ENCODE measurements at regions of chr1 and their contacts with region 1.

Region 1: DNA sequence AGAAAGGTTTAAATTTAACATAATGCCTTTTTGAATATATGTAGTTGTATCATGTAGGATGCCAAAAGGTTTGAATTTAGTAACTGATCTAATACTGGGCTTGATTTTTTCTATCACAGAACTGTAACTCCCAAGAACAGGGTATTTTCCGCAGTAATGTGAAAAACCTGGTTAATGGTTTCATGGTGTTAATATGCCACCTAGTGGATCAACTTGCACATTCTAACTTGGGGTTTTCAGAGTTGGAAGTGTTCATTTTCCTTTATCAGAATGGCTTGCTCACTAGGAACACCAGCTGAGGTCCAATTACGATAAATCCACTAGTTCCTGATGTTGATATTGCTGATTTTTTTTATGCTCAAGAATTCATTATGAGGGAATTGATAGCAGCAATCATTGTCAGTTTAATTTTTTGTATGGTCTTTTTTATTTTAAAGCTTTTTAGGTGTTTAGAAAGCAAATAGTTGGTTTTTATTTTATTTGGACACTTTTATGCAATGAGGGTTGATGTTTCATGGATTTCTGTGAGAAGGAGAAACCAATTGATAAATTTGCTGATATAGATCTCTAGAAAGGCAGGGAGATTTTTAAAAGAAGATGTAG is 157.2 kb downstream of the PLA2G4A start:
- DNase-seq: peak in 3 of 14 experiments; percentile 42 to 59 (median 55)
- ATAC-seq: peak; percentile 34
- H3K4me3 ChIP-seq: no peak overlapping the region
- H3K4me3 Mint-ChIP-seq: no peak overlapping the region
- H3K27ac ChIP-seq: no peak overlapping the region
- H3K27ac Mint-ChIP-seq: no peak overlapping the region
- H3K4me1 ChIP-seq: no peaks in the 10 kb centered on the region
- H3K4me1 Mint-ChIP-seq: no peaks in the 10 kb centered on the region
- H3K27me3 ChIP-seq: no peaks in the 10 kb centered on the region
- H3K27me3 Mint-ChIP-seq: no peaks in the 10 kb centered on the region
- CTCF ChIP-seq: peak; percentile 63

Region 2: DNA sequence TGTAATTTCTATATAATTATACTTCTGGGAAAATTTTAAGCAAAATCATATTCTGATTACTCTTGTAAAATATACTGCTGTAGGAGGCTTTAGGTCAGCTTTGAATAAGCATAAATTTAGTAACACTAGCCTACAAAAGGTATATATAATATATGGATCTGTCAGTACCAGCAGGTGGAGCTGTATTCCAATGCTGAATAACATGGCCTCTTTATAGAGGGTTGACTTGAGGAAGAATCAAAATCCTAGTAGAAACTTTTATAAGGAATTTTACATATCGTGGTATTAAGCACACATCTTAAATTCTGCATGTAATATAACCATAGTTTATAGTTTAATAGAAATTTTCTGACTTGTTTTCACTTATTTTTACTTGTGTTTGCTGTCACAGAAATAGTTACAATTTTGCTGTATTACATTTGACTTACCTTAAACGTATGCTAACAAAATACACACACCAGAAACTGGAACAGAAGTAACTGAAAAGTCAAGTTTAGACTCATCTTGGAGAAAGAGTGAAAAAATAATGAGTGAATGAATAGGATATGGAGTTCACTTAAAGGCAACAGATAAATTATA is 1172.5 kb before region 1 on chr1:
- CTCF ChIA-PET with region 1: no interaction called
- POLR2A ChIA-PET with region 1: no interaction called
- intact Hi-C with region 1: loop called in 1 of 2 experiments (anchors 10 kb)
- DNase-seq: peak in 3 of 14 experiments; percentile 20 to 32 (median 26)
- ATAC-seq: no peak
- H3K4me3 ChIP-seq: no peak overlapping the region
- H3K4me3 Mint-ChIP-seq: no peak overlapping the region
- H3K27ac ChIP-seq: no peak overlapping the region
- H3K27ac Mint-ChIP-seq: no peak overlapping the region
- H3K4me1 ChIP-seq: no peaks in the 10 kb centered on the region
- H3K4me1 Mint-ChIP-seq: no peaks in the 10 kb centered on the region
- H3K27me3 ChIP-seq: no peaks in the 10 kb centered on the region
- H3K27me3 Mint-ChIP-seq: peaks cover 15% of the 10 kb centered on the region
- CTCF ChIP-seq: peak; percentile 53

Region 3: GRCh38 chr1:186272486-186272885 is 713.5 kb before region 1 on chr1:
- CTCF ChIA-PET with region 1: no interaction called
- POLR2A ChIA-PET with region 1: no interaction called
- intact Hi-C with region 1: loop called in 1 of 2 experiments (anchors 10 kb)
- DNase-seq: peak in 3 of 14 experiments; percentile 25 to 46 (median 41)
- ATAC-seq: peak; percentile 48
- H3K4me3 ChIP-seq: no peak overlapping the region
- H3K4me3 Mint-ChIP-seq: no peak overlapping the region
- H3K27ac ChIP-seq: no peak overlapping the region
- H3K27ac Mint-ChIP-seq: no peak overlapping the region
- H3K4me1 ChIP-seq: no peaks in the 10 kb centered on the region
- H3K4me1 Mint-ChIP-seq: peaks cover 10% of the 10 kb centered on the region
- H3K27me3 ChIP-seq: no peaks in the 10 kb centered on the region
- H3K27me3 Mint-ChIP-seq: no peaks in the 10 kb centered on the region
- CTCF ChIP-seq: peak; percentile 67

Region 4: DNA sequence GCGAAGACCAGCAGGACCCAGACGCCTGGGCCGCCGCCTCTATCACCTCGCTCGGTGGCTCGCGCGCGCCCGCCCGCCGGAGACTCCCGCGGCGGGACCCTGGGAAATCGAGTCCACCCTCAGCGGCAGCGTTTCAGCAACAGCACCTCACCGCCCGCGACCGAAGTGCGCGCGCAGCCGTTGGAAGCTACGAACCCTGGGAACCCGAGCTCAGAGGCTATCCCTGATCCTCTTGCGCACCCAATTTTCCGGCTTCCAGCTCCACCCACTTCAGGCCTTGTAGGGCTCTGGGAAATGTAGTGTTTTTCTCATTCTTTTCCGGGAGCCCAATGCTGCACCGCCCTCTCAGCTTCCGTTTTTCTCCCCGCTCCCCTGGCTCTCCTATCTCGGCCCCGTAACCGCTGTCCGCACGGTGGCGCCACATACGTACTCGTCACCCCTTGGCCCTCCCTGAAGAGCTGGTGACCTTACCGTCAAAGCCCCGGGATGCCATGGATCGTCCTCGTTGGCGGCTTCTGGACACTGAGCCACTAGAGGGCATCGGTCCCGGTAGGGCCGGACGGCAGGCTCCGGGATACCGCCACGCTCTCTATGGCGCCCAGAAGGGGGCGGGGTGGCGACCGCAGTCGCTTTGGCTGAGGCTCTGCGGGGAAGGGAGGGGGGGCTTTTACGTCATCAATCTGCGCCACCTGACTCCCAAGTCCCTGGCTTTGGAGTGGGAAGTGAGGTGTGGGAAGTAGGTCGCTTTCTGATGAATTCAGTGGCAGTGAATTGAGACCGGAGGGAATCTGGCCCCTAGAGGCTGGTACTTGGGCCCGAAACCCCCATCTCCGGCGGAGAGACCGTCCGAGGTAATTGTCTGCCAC is 610.7 kb before region 1 on chr1 and contains the starts of genes ODR4 and TPR:
- CTCF ChIA-PET with region 1: no interaction called
- POLR2A ChIA-PET with region 1: no interaction called
- intact Hi-C with region 1: loop called in 1 of 2 experiments (anchors 1 kb)
- DNase-seq: peak; percentile 89 to 99 (median 94)
- ATAC-seq: peak; percentile 87
- H3K4me3 ChIP-seq: peak within 1 kb of the TSS; percentile 79
- H3K4me3 Mint-ChIP-seq: peak within 1 kb of the TSS; percentile 92
- H3K27ac ChIP-seq: peak within 1 kb of the TSS; percentile 89 to 96
- H3K27ac Mint-ChIP-seq: peak within 1 kb of the TSS; percentile 93
- H3K4me1 ChIP-seq: peaks cover 16% of the 10 kb centered on the region
- H3K4me1 Mint-ChIP-seq: peaks cover 77% of the 10 kb centered on the region
- H3K27me3 ChIP-seq: no peaks in the 10 kb centered on the region
- H3K27me3 Mint-ChIP-seq: no peaks in the 10 kb centered on the region
- CTCF ChIP-seq: peak; percentile 85
- total RNA-seq, gene ODR4: 21.3 to 24.5 TPM
- total RNA-seq, gene TPR: 82.3 to 91.3 TPM

Region 5: GRCh38 chr1:186404454-186405051 is 581.4 kb before region 1 on chr1:
- CTCF ChIA-PET with region 1: no interaction called
- POLR2A ChIA-PET with region 1: no interaction called
- intact Hi-C with region 1: loop called (anchors 2 to 10 kb)
- DNase-seq: peak in 3 of 14 experiments; percentile 63 to 64 (median 63)
- ATAC-seq: peak; percentile 92
- H3K4me3 ChIP-seq: no peak overlapping the region
- H3K4me3 Mint-ChIP-seq: no peak overlapping the region
- H3K27ac ChIP-seq: no peak overlapping the region
- H3K27ac Mint-ChIP-seq: peak overlapping the region; percentile 78
- H3K4me1 ChIP-seq: no peaks in the 10 kb centered on the region
- H3K4me1 Mint-ChIP-seq: no peaks in the 10 kb centered on the region
- H3K27me3 ChIP-seq: no peaks in the 10 kb centered on the region
- H3K27me3 Mint-ChIP-seq: no peaks in the 10 kb centered on the region
- CTCF ChIP-seq: peak; percentile 83

Region 6: GRCh38 chr1:186482661-186483255 is 503.2 kb before region 1 on chr1:
- CTCF ChIA-PET with region 1: no interaction called
- POLR2A ChIA-PET with region 1: no interaction called
- intact Hi-C with region 1: loop called in 1 of 2 experiments (anchors 2 kb)
- DNase-seq: peak in 11 of 14 experiments; percentile 1 to 53 (median 4)
- ATAC-seq: no peak
- H3K4me3 ChIP-seq: no peak overlapping the region
- H3K4me3 Mint-ChIP-seq: no peak overlapping the region
- H3K27ac ChIP-seq: no peak overlapping the region
- H3K27ac Mint-ChIP-seq: no peak overlapping the region
- H3K4me1 ChIP-seq: no peaks in the 10 kb centered on the region
- H3K4me1 Mint-ChIP-seq: no peaks in the 10 kb centered on the region
- H3K27me3 ChIP-seq: no peaks in the 10 kb centered on the region
- H3K27me3 Mint-ChIP-seq: no peaks in the 10 kb centered on the region
- CTCF ChIP-seq: peak; percentile 71

Region 7: DNA sequence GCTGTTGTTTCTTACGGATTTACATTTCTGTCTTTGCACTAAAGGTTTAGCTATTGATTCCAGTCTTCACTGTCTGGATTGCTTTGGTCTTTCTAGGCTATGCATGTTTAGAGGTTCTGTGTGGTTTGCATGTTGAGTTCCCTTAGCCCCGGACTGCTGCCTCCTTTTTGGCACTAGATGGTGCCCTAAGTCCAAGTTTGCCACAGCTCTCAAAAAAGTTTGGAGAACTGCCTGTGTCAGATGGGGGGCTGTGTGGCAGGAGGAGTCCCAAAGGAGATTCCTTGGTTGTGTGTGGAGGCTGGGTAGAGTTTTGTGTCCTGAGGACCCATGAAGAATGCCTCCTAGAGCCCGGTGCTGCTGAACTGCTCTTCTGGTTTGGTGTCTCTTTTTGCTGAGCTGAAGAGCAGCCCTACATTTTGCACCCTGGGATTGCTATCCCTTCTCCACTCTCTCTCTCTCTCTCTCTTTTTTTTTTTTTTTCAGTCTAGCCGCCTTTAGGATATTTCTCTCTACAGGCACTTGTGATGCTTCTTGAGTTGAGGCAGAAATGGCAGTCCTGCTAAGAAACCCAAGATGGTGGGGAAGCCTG is 380.1 kb before region 1 on chr1:
- CTCF ChIA-PET with region 1: no interaction called
- POLR2A ChIA-PET with region 1: no interaction called
- intact Hi-C with region 1: loop called (anchors 1 to 2 kb)
- DNase-seq: peak in 3 of 14 experiments; percentile 21 to 55 (median 47)
- ATAC-seq: no peak
- H3K4me3 ChIP-seq: no peak overlapping the region
- H3K4me3 Mint-ChIP-seq: no peak overlapping the region
- H3K27ac ChIP-seq: no peak overlapping the region
- H3K27ac Mint-ChIP-seq: no peak overlapping the region
- H3K4me1 ChIP-seq: no peaks in the 10 kb centered on the region
- H3K4me1 Mint-ChIP-seq: no peaks in the 10 kb centered on the region
- H3K27me3 ChIP-seq: no peaks in the 10 kb centered on the region
- H3K27me3 Mint-ChIP-seq: peaks cover 32% of the 10 kb centered on the region
- CTCF ChIP-seq: peak; percentile 27

Measured in CD4-positive, alpha-beta T cell (primary cell).